GM12878 (cell line): ENCODE measurements at regions of chr4 and their contacts with region 1.

Region 1: DNA sequence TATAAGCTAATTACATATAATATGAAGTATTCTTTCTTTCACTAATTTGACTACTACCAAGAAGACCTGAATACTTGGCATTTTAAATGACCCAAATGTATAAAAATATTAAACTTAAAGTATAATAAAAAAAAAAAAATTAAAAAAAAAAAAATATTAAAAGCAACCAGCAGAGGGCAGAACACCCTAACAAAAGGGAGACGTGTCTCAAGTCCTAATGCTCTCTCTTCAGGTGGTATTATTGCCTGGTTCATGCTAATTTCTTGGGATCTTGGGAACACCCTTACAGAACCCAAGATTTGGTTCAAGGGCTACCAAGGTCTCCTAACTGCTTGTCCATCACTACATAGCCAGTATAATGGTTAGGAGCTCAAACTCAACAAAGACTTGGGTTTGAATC is 754.8 kb downstream of the RAB28 start:
- DNase-seq: no peak
- ATAC-seq: peak; percentile 48; the same call in 2 of the 3 replicates
- H3K4me3 ChIP-seq: no peak overlapping the region
- H3K27ac ChIP-seq: no peak overlapping the region
- H3K4me1 ChIP-seq: no peaks in the 10 kb centered on the region
- H3K27me3 ChIP-seq: no peaks in the 10 kb centered on the region
- CTCF ChIP-seq: peak in 2 of 3 experiments; percentile 29 to 35; a peak in 3 of 6 replicates
- EP300 ChIP-seq: no peak
- POLR2A ChIP-seq: no peak
- RAD21 ChIP-seq: peak; percentile 74

Region 2: GRCh38 chr4:12084690-12085089 is 644.7 kb before region 1 on chr4:
- CTCF ChIA-PET with region 1: no interaction called
- POLR2A ChIA-PET with region 1: no interaction called
- RAD21 ChIA-PET with region 1: no interaction called
- SMC1A ChIA-PET with region 1: no interaction called
- in situ Hi-C with region 1: no loop called
- intact Hi-C with region 1: no loop called
- DNase-seq: no peak
- ATAC-seq: no peak
- H3K4me3 ChIP-seq: no peak overlapping the region
- H3K27ac ChIP-seq: no peak overlapping the region
- H3K4me1 ChIP-seq: no peaks in the 10 kb centered on the region
- H3K27me3 ChIP-seq: no peaks in the 10 kb centered on the region
- CTCF ChIP-seq: no peak
- EP300 ChIP-seq: no peak
- POLR2A ChIP-seq: no peak
- RAD21 ChIP-seq: no peak

Region 3: GRCh38 chr4:12678948-12679616 is 50.3 kb before region 1 on chr4:
- CTCF ChIA-PET with region 1: interaction called, 15 read pairs
- POLR2A ChIA-PET with region 1: no interaction called
- RAD21 ChIA-PET with region 1: no interaction called
- SMC1A ChIA-PET with region 1: no interaction called
- in situ Hi-C with region 1: no loop called
- intact Hi-C with region 1: loop called (anchors 1 kb)
- DNase-seq: no peak
- ATAC-seq: no peak
- H3K4me3 ChIP-seq: no peak overlapping the region
- H3K27ac ChIP-seq: no peak overlapping the region
- H3K4me1 ChIP-seq: no peaks in the 10 kb centered on the region
- H3K27me3 ChIP-seq: no peaks in the 10 kb centered on the region
- CTCF ChIP-seq: peak in 2 of 3 experiments; percentile 22 to 31; a peak in 3 of 6 replicates
- EP300 ChIP-seq: no peak
- POLR2A ChIP-seq: no peak
- RAD21 ChIP-seq: peak; percentile 44

Region 4: DNA sequence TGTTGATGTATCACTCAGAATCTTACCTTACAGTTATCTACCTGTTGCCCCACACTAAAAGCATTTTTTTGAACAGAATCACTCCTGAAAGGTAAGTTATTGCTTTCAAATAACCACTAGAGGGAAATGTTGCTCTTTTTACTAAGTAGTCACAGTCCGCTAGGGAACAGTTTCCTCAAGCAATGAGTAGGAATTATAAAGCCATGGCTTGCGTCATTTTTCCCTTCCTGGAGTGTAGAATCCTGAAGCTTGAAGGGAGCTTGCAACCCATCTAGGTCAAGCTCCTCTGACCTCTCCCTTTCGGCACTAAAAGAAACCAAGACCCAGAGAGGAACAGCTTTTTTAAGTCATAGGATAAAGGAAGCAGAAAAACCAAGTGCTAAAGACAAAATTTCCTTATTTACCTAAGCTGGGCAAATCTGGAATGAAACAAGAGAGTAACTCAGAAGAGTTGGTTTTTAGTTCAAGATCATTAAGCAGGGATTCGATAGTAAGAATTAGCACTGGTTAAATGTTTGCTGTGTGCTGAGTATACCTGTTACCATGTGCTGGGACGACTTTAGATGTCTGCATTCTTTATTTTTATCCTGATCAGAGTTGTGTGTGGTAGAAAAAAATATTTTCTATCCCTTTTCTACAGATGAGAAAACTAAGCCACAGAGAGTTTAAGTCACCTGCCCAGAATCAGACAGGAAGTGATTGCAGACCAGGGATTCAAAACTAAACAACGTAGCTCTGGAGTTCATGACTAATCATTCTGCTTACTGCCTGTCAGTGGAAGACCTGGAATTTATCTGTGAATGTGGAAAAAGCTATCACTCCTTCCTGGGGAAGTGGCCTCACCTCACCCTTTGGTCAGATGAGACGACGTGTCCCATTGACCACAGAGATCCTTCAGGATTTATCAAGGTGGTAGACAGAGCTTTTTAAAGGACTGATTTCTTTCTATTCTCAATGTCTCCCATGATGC is 123.2 kb after region 1 on chr4:
- CTCF ChIA-PET with region 1: interaction called, 9 read pairs
- POLR2A ChIA-PET with region 1: no interaction called
- RAD21 ChIA-PET with region 1: interaction called, 3 read pairs
- SMC1A ChIA-PET with region 1: no interaction called
- in situ Hi-C with region 1: no loop called
- intact Hi-C with region 1: loop called (anchors 2 kb)
- DNase-seq: no peak
- ATAC-seq: peak; percentile 84
- H3K4me3 ChIP-seq: no peak overlapping the region
- H3K27ac ChIP-seq: no peak overlapping the region
- H3K4me1 ChIP-seq: no peaks in the 10 kb centered on the region
- H3K27me3 ChIP-seq: no peaks in the 10 kb centered on the region
- CTCF ChIP-seq: peak; percentile 32 to 62 (median 48); a peak in 5 of 6 replicates
- EP300 ChIP-seq: no peak
- POLR2A ChIP-seq: no peak
- RAD21 ChIP-seq: peak; percentile 65